CD4-positive, alpha-beta T cell (primary cell): ENCODE measurements at regions of chrX and their contacts with region 1.

Region 1: GRCh38 chrX:46722742-46723568 is 36.0 kb downstream of the SLC9A7 start:
- DNase-seq: no peak
- ATAC-seq: no peak
- H3K4me3 ChIP-seq: no peak overlapping the region
- H3K4me3 Mint-ChIP-seq: no peak overlapping the region
- H3K27ac ChIP-seq: no peak overlapping the region
- H3K27ac Mint-ChIP-seq: no peak overlapping the region
- H3K4me1 ChIP-seq: no peaks in the 10 kb centered on the region
- H3K4me1 Mint-ChIP-seq: no peaks in the 10 kb centered on the region
- H3K27me3 ChIP-seq: no peaks in the 10 kb centered on the region
- H3K27me3 Mint-ChIP-seq: no peaks in the 10 kb centered on the region
- CTCF ChIP-seq: no peak

Region 2: DNA sequence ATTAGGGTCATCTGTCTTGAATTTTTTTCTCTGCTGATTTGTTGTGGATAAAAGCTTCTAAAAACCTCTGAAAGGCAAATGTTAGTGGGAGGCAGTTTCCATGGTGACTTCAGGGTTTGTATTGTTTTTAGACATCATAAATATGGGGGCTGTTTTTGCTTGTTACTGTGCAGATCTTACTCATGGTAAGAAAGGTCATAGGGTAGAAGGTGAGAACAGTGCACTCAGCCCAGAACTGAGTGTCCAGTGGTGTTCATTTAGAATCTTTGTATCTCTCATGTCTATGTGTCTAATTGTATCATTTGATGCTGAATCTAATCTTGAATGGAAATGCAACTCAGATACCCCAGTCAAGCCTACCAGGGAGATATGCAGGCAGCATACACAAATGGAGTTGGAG is 787.5 kb before region 1 on chrX:
- CTCF ChIA-PET with region 1: no interaction called
- POLR2A ChIA-PET with region 1: no interaction called
- intact Hi-C with region 1: loop called in 1 of 2 experiments (anchors 10 kb)
- DNase-seq: no peak
- ATAC-seq: no peak
- H3K4me3 ChIP-seq: no peak overlapping the region
- H3K4me3 Mint-ChIP-seq: no peak overlapping the region
- H3K27ac ChIP-seq: no peak overlapping the region
- H3K27ac Mint-ChIP-seq: no peak overlapping the region
- H3K4me1 ChIP-seq: no peaks in the 10 kb centered on the region
- H3K4me1 Mint-ChIP-seq: no peaks in the 10 kb centered on the region
- H3K27me3 ChIP-seq: no peaks in the 10 kb centered on the region
- H3K27me3 Mint-ChIP-seq: no peaks in the 10 kb centered on the region
- CTCF ChIP-seq: no peak